Right cardiac atrium (tissue), 5 donors: ENCODE measurements at regions of chr5 and their contacts with region 1.

Region 1: GRCh38 chr5:138583984-138584637 is 8.9 kb upstream of the HSPA9 start:
- DNase-seq: no peak
- ATAC-seq: no peak
- H3K4me3 ChIP-seq: no peak overlapping the region
- H3K27ac ChIP-seq: no peak overlapping the region
- H3K4me1 ChIP-seq: no peaks in the 10 kb centered on the region
- H3K27me3 ChIP-seq: no peaks in the 10 kb centered on the region

Region 2: GRCh38 chr5:139251281-139251687 is 667.2 kb after region 1 on chr5:
- intact Hi-C with region 1: loop called in 1 of 4 experiments (anchors 10 kb)
- DNase-seq: no peak
- ATAC-seq: no peak
- H3K4me3 ChIP-seq: no peak overlapping the region
- H3K27ac ChIP-seq: no peak overlapping the region
- H3K4me1 ChIP-seq: no peaks in the 10 kb centered on the region
- H3K27me3 ChIP-seq: no peaks in the 10 kb centered on the region